ENCODE measurements at regions of chr1 and their contacts with region 1.

Region 1: GRCh38 chr1:153860285-153860684 is 62.5 kb downstream of the GATAD2B start:
- DNase-seq: no peak
- H3K4me3 ChIP-seq: no peak overlapping the region
- H3K27ac ChIP-seq: no peak overlapping the region
- H3K4me1 ChIP-seq: no peaks in the 10 kb centered on the region
- H3K27me3 ChIP-seq: no peaks in the 10 kb centered on the region
- CTCF ChIP-seq: no peak

Region 2: GRCh38 chr1:153912349-153912748 is 52.1 kb after region 1 on chr1:
- intact Hi-C with region 1: loop called (anchors 5 kb)
- DNase-seq: no peak
- H3K4me3 ChIP-seq: no peak overlapping the region
- H3K27ac ChIP-seq: no peak overlapping the region
- H3K4me1 ChIP-seq: no peaks in the 10 kb centered on the region
- H3K27me3 ChIP-seq: no peaks in the 10 kb centered on the region
- CTCF ChIP-seq: no peak

Region 3: GRCh38 chr1:153929981-153930948 is 70.0 kb after region 1 on chr1:
- intact Hi-C with region 1: no loop called
- DNase-seq: no peak
- H3K4me3 ChIP-seq: no peak overlapping the region
- H3K27ac ChIP-seq: no peak overlapping the region
- H3K4me1 ChIP-seq: no peaks in the 10 kb centered on the region
- H3K27me3 ChIP-seq: no peaks in the 10 kb centered on the region
- CTCF ChIP-seq: no peak

Measured in ascending aorta (tissue), 2 donors.